Dorsolateral prefrontal cortex (tissue), 120 donors: ENCODE measurements at regions of chrX and their contacts with region 1.

Region 1: GRCh38 chrX:129540068-129540653 is at the start of gene OCRL:
- DNase-seq: peak in 9 of 10 donors; percentile 50 to 80 (median 65)
- H3K4me3 ChIP-seq: peak within 1 kb of the TSS; percentile 34 to 77 (median 62)
- H3K27ac ChIP-seq: peak within 1 kb of the TSS in 51 of 59 donors; percentile 12 to 86 (median 65)
- H3K27me3 ChIP-seq: peaks cover 0 to 53% (median 8%) of the 10 kb centered on the region in 45 donors
- CTCF ChIP-seq: peak; percentile 43 to 79 (median 67)
- total RNA-seq, gene OCRL: 23.0 to 59.1 (median 44.3) TPM

Region 2: DNA sequence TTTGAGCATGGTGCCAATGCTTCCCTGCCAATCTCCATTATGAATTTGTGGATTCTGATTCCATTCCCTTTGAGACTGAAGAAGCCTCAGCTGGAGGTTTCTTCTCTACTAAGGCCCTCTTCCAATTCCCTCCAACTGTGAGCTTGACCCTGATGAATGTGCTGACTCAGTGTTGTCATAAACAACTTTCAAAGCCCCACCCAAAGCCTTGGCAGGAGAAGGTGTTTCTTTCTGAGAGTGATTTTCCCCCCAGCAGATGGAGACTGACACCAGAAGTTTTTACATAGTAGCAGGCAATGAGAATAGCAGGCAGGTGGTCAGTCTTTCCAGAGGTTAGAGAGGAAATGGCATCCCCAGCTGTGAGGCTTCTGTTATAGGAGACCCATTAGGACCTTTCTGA is 53.0 kb after region 1 on chrX:
- intact Hi-C with region 1: loop called in 1 of 2 experiments (anchors 10 kb)
- DNase-seq: no peak
- H3K4me3 ChIP-seq: no peak overlapping the region
- H3K27ac ChIP-seq: no peak overlapping the region
- H3K27me3 ChIP-seq: peaks cover 0 to 57% (median 7%) of the 10 kb centered on the region in 45 donors
- CTCF ChIP-seq: no peak